Activated CD4-positive, alpha-beta T cell treated with anti-CD3 and anti-CD28 coated beads for 36 hours (primary cell): ENCODE measurements at regions of chr19 and their contacts with region 1.

Region 1: DNA sequence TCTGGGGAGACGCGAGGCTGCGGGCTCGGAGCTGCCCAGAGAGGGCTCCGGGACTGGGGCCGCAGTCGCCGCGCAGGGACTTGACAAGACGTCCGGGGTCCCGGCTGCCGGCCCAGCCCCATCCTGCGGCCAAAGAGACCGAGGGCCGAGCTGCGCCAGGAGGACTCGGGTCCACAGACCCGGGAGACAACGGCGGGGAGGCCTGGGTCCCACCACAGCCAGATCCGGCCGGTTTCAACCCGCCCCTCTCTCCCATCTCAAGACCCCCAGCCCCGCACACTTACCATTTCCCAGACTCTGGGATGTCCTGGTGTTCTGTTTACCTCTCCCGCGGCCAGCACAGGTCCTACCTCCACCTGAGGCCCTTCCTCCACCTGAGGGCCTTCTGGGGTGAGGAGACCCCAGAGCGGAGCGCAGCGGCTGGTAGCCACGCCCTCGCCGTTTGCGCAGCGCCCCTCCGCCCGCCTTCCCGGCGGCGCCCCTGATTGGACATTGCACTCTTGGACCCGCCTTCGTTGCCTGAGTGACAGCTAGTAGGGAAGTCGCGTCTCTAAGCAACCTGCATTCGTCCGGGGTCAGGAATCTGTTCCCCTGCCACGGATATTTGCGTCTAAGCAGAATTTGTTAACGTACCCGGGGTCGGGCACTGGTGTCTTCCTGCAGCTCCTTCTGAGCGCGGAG is at the start of gene ZNF709:
- DNase-seq: peak; percentile 92
- ATAC-seq: peak; percentile 98
- H3K4me3 Mint-ChIP-seq: peak within 1 kb of the TSS; percentile 87
- H3K27ac Mint-ChIP-seq: peak within 1 kb of the TSS; percentile 58
- H3K4me1 Mint-ChIP-seq: peaks cover 27% of the 10 kb centered on the region
- H3K27me3 Mint-ChIP-seq: no peaks in the 10 kb centered on the region
- total RNA-seq, gene ZNF709: 1.7 to 2.1 TPM

Region 2: GRCh38 chr19:11766597-11767591 is 717.6 kb before region 1 on chr19 and contains the start of gene ZNF441:
- CTCF ChIA-PET with region 1: no interaction called
- POLR2A ChIA-PET with region 1: no interaction called
- intact Hi-C with region 1: no loop called
- DNase-seq: peak; percentile 98
- ATAC-seq: peak; percentile 99
- H3K4me3 Mint-ChIP-seq: peak within 1 kb of the TSS; percentile 88
- H3K27ac Mint-ChIP-seq: peak within 1 kb of the TSS; percentile 95
- H3K4me1 Mint-ChIP-seq: peaks cover 13% of the 10 kb centered on the region
- H3K27me3 Mint-ChIP-seq: peaks cover 12% of the 10 kb centered on the region
- total RNA-seq, gene ZNF441: 4.3 to 5.0 TPM

Region 3: GRCh38 chr19:12294249-12295158 is 190.0 kb before region 1 on chr19 and contains the start of gene ZNF44:
- CTCF ChIA-PET with region 1: interaction called, 3 read pairs
- POLR2A ChIA-PET with region 1: no interaction called
- intact Hi-C with region 1: loop called in 1 of 2 experiments (anchors 2 kb)
- DNase-seq: peak; percentile 98
- ATAC-seq: peak; percentile 98
- H3K4me3 Mint-ChIP-seq: peak within 1 kb of the TSS; percentile 98
- H3K27ac Mint-ChIP-seq: peak within 1 kb of the TSS; percentile 98
- H3K4me1 Mint-ChIP-seq: peaks cover 32% of the 10 kb centered on the region
- H3K27me3 Mint-ChIP-seq: no peaks in the 10 kb centered on the region
- total RNA-seq, gene ZNF44: 7.3 to 8.1 TPM

Region 4: GRCh38 chr19:12495002-12495802 is 10.7 kb after region 1 on chr19:
- CTCF ChIA-PET with region 1: interaction called, 5 read pairs
- POLR2A ChIA-PET with region 1: interaction called, 6 read pairs
- intact Hi-C with region 1: loop called in 1 of 2 experiments (anchors 1 kb)
- DNase-seq: peak; percentile 97
- ATAC-seq: peak; percentile 100
- H3K4me3 Mint-ChIP-seq: peak overlapping the region; percentile 75
- H3K27ac Mint-ChIP-seq: peak overlapping the region; percentile 71
- H3K4me1 Mint-ChIP-seq: peaks cover 7% of the 10 kb centered on the region
- H3K27me3 Mint-ChIP-seq: no peaks in the 10 kb centered on the region

Region 5: GRCh38 chr19:12527034-12527836 is 42.7 kb after region 1 on chr19:
- CTCF ChIA-PET with region 1: no interaction called
- POLR2A ChIA-PET with region 1: no interaction called
- intact Hi-C with region 1: no loop called
- DNase-seq: no peak
- ATAC-seq: no peak
- H3K4me3 Mint-ChIP-seq: no peak overlapping the region
- H3K27ac Mint-ChIP-seq: no peak overlapping the region
- H3K4me1 Mint-ChIP-seq: no peaks in the 10 kb centered on the region
- H3K27me3 Mint-ChIP-seq: no peaks in the 10 kb centered on the region